ENCODE measurements at regions of chr14 and their contacts with region 1.

Region 1: GRCh38 chr14:92135267-92135666 is 13.5 kb downstream of the CPSF2 start:
- DNase-seq: no peak
- H3K4me3 ChIP-seq: no peak overlapping the region
- H3K27ac ChIP-seq: no peak overlapping the region
- H3K4me1 ChIP-seq: peaks cover 4% of the 10 kb centered on the region
- H3K27me3 ChIP-seq: no peaks in the 10 kb centered on the region
- CTCF ChIP-seq: peak; percentile 59

Region 2: GRCh38 chr14:92014040-92014439 is 121.2 kb before region 1 on chr14:
- intact Hi-C with region 1: no loop called
- DNase-seq: no peak
- H3K4me3 ChIP-seq: no peak overlapping the region
- H3K27ac ChIP-seq: no peak overlapping the region
- H3K4me1 ChIP-seq: no peaks in the 10 kb centered on the region
- H3K27me3 ChIP-seq: no peaks in the 10 kb centered on the region
- CTCF ChIP-seq: no peak

Region 3: DNA sequence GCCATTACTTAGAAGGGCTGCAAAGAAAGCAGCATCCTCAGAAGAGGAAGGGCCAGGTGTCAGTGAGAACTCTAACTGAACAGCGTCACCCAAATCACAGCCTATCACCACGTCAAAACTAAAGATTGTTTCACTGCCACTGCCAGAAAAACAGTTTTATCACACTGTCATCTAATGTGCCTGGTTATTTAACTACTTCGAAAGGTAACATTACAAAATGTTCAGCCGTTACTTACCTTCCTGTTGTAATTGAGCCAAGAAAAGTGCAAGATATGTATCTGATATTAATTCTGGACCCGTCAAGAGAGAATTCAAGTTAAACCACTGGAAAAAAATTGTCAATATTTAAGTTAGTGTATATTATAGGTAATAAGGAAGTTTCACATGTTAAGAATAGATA is 46.8 kb before region 1 on chr14:
- intact Hi-C with region 1: no loop called
- DNase-seq: no peak
- H3K4me3 ChIP-seq: no peak overlapping the region
- H3K27ac ChIP-seq: no peak overlapping the region
- H3K4me1 ChIP-seq: no peaks in the 10 kb centered on the region
- H3K27me3 ChIP-seq: no peaks in the 10 kb centered on the region
- CTCF ChIP-seq: no peak

Region 4: GRCh38 chr14:92248696-92249095 is 113.4 kb after region 1 on chr14:
- intact Hi-C with region 1: no loop called
- DNase-seq: no peak
- H3K4me3 ChIP-seq: no peak overlapping the region
- H3K27ac ChIP-seq: no peak overlapping the region
- H3K4me1 ChIP-seq: no peaks in the 10 kb centered on the region
- H3K27me3 ChIP-seq: peaks cover 46% of the 10 kb centered on the region
- CTCF ChIP-seq: no peak

Region 5: GRCh38 chr14:92686900-92687444 is 551.7 kb after region 1 on chr14:
- intact Hi-C with region 1: loop called (anchors 10 kb)
- DNase-seq: peak; percentile 80
- H3K4me3 ChIP-seq: peak overlapping the region; percentile 67
- H3K27ac ChIP-seq: no peak overlapping the region
- H3K4me1 ChIP-seq: peaks cover 20% of the 10 kb centered on the region
- H3K27me3 ChIP-seq: no peaks in the 10 kb centered on the region
- CTCF ChIP-seq: peak; percentile 98

Region 6: GRCh38 chr14:92844204-92844603 is 708.9 kb after region 1 on chr14:
- intact Hi-C with region 1: no loop called
- DNase-seq: no peak
- H3K4me3 ChIP-seq: no peak overlapping the region
- H3K27ac ChIP-seq: no peak overlapping the region
- H3K4me1 ChIP-seq: peaks cover 11% of the 10 kb centered on the region
- H3K27me3 ChIP-seq: no peaks in the 10 kb centered on the region
- CTCF ChIP-seq: no peak

Measured in left ventricle myocardium inferior (tissue), 1 donor.